Activated T-helper 2 cell treated with anti-CD3 and anti-CD28 coated beads, Interferon-gamma antibody, Interleukin-2, Interleukin-4, amounts not matched to agents 10 μg/mL and 5 μg/mL and 100 μg/mL, durations not matched to agents 14 hours and 24 hours and 36 hours (primary cell): ENCODE measurements at regions of chr7 and their contacts with region 1.

Region 1: GRCh38 chr7:17234398-17235031 is 63.9 kb upstream of the AHR start:
- DNase-seq: peak; percentile 67
- H3K4me3 Mint-ChIP-seq: peak overlapping the region; percentile 58
- H3K27ac Mint-ChIP-seq: peak overlapping the region; percentile 83
- H3K4me1 Mint-ChIP-seq: peaks cover 44% of the 10 kb centered on the region
- H3K27me3 Mint-ChIP-seq: peaks cover 3% of the 10 kb centered on the region

Region 2: DNA sequence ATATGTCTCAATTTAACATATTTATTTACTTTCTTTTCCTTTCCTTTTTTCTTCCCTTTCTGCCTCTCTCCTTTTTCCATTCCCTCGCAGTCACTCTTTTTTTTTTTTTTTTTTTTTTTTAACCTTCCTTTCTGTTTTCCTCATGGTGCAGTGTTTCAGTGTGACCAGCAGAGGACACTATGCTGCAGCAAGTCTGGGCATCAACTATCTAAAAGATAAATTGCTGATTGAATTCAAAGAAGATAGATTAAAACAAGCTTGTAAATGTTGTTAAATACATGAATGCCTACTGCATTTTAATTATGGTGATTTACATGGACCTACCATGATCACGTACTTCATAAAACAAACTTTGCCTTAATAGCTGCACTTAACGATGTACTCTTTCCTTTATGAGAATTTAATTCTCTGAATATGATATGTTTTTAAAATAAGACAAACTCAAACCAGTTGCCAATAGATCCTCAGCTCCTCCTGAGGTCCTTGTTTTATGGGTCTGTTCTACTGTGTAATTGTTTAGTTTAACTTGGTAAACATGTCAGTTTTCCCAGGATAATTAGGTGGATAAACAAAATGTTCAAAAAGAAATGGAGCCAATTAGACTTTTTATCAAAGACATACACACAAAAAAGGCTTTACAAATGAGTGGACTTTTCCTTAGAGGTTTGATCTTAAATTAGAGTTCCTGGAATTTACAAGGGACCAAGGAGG is 251.7 kb before region 1 on chr7:
- intact Hi-C with region 1: loop called (anchors 1 kb)
- DNase-seq: no peak
- H3K4me3 Mint-ChIP-seq: peak overlapping the region; percentile 51
- H3K27ac Mint-ChIP-seq: no peak overlapping the region
- H3K4me1 Mint-ChIP-seq: peaks cover 17% of the 10 kb centered on the region
- H3K27me3 Mint-ChIP-seq: peaks cover 49% of the 10 kb centered on the region

Region 3: GRCh38 chr7:17021180-17021579 is 213.3 kb before region 1 on chr7:
- intact Hi-C with region 1: loop called (anchors 1 kb)
- DNase-seq: no peak
- H3K4me3 Mint-ChIP-seq: no peak overlapping the region
- H3K27ac Mint-ChIP-seq: no peak overlapping the region
- H3K4me1 Mint-ChIP-seq: peaks cover 21% of the 10 kb centered on the region
- H3K27me3 Mint-ChIP-seq: peaks cover 3% of the 10 kb centered on the region

Region 4: GRCh38 chr7:17134786-17135185 is 99.7 kb before region 1 on chr7:
- intact Hi-C with region 1: loop called (anchors 1 kb)
- DNase-seq: no peak
- H3K4me3 Mint-ChIP-seq: no peak overlapping the region
- H3K27ac Mint-ChIP-seq: peak overlapping the region; percentile 77
- H3K4me1 Mint-ChIP-seq: peaks cover 70% of the 10 kb centered on the region
- H3K27me3 Mint-ChIP-seq: no peaks in the 10 kb centered on the region

Region 5: GRCh38 chr7:17159500-17160037 is 74.9 kb before region 1 on chr7:
- intact Hi-C with region 1: loop called (anchors 1 kb)
- DNase-seq: no peak
- H3K4me3 Mint-ChIP-seq: no peak overlapping the region
- H3K27ac Mint-ChIP-seq: peak overlapping the region; percentile 36
- H3K4me1 Mint-ChIP-seq: peaks cover 50% of the 10 kb centered on the region
- H3K27me3 Mint-ChIP-seq: no peaks in the 10 kb centered on the region

Region 6: DNA sequence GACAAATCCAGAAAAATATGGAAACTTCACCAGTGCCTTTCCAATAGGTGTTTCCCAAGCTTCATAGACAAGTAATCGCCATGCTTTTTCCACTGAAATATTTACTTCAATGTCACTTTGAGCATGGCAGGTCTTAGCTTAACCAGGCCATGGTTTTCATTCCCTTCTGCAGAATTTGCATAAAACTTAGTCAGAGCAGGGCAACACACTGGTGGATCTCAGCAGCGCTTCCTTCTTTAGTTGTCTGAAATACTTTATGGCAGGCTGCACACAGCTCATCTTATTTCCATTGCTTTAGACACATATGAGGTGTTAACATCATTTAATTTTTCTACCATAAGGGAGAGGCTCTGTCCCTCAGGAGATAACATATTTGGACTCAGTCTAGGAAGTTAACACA is 38.9 kb before region 1 on chr7:
- intact Hi-C with region 1: no loop called
- DNase-seq: no peak
- H3K4me3 Mint-ChIP-seq: no peak overlapping the region
- H3K27ac Mint-ChIP-seq: no peak overlapping the region
- H3K4me1 Mint-ChIP-seq: peaks cover 13% of the 10 kb centered on the region
- H3K27me3 Mint-ChIP-seq: no peaks in the 10 kb centered on the region

Region 7: GRCh38 chr7:17298207-17298839 is 63.8 kb after region 1 on chr7 and contains the start of gene AHR:
- intact Hi-C with region 1: loop called (anchors 1 kb)
- DNase-seq: peak; percentile 67
- H3K4me3 Mint-ChIP-seq: peak within 1 kb of the TSS; percentile 96
- H3K27ac Mint-ChIP-seq: peak within 1 kb of the TSS; percentile 95
- H3K4me1 Mint-ChIP-seq: peaks cover 23% of the 10 kb centered on the region
- H3K27me3 Mint-ChIP-seq: peaks cover 2% of the 10 kb centered on the region
- total RNA-seq, gene AHR: 34.3 and 37.2 TPM in 2 replicates

Region 8: DNA sequence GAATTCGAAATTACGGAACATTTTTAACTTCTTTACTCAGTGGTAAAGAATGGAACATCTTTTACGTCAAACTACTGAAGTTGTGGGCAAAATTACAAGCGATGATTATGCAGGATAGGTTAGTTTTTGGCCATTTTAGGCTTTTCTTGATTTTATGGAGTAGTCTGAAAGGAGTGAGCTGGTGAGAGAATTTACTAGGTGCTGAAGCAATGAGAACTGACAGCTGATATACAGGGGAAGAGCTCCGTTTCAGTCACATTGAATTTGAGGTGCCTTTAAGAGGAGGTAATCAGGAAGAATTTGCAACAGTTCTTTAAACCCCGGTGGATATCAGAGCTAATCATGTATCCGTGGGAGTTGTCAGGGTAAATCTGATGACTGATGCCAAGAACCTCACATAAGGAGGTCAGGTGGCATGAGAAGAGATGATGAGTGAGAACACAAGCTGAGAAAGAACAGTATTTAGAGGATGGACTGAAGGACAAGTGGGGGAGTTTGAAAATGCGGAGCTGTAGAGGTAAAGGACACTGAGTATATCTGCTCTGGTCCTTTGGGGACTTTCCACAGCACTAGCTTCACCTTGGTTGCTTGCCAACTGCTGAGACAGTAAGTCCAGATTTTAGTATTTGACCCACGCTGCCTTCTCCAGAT is 168.2 kb after region 1 on chr7:
- intact Hi-C with region 1: loop called (anchors 1 kb)
- DNase-seq: no peak
- H3K4me3 Mint-ChIP-seq: peak overlapping the region; percentile 22
- H3K27ac Mint-ChIP-seq: peak overlapping the region; percentile 81
- H3K4me1 Mint-ChIP-seq: peaks cover 35% of the 10 kb centered on the region
- H3K27me3 Mint-ChIP-seq: peaks cover 2% of the 10 kb centered on the region